Dendritic cell treated with granulocyte-macrophage colony-stimulating factor and Interleukin-4, amounts not matched to agents 40 ng/mL and 50 ng/mL, for 4 days (primary cell): ENCODE measurements at regions of chr15 and their contacts with region 1.

Region 1: GRCh38 chr15:65869127-65869953 is at the start of gene RAB11A:
- H3K4me3 Mint-ChIP-seq: peak within 1 kb of the TSS; percentile 96
- H3K27ac Mint-ChIP-seq: peak within 1 kb of the TSS; percentile 98
- H3K4me1 Mint-ChIP-seq: peaks cover 24% of the 10 kb centered on the region
- H3K27me3 Mint-ChIP-seq: no peaks in the 10 kb centered on the region

Region 2: DNA sequence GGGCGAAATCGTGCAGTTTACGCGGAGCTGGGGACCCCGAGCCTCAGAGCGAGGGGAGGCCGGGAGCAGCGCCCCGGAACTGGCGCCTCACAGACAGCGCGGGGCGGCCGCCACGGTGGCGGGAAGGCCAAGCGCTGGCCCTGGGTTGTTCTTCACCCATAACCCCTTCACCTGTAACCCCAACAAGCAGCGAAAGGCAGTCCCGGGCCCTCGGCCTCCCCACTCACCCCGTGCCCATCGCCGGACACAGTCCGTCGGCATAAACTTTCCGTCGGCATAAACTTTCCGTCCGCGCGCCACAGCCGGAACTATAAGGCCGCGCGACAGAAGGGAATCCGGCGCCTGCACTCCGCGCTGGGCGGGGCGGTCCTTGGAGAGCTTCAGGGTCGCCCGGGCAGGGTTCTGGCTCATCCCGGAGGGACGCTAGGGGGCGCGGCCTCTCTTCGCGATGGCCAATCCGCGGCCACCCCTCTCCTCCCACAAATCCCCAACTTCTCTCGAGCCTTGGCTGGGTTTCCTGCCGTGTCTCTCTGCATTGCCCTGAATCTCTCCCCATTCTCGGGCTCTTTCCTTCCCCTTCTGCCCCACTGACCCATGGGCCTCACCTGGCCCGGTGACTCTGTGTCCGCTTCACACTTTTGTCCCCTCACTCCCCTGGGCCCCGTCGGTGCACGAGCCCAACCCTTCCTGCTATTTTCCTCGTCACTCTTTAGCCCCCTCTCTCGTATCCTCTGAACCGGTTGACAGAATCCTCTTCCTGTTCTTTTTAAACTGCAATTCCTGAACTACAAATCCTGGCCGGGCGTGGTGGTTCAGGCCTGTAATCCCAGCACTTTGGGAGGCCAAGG is 258.2 kb before region 1 on chr15 and contains the start of gene INTS14:
- intact Hi-C with region 1: loop called (anchors 1 kb)
- H3K4me3 Mint-ChIP-seq: peak within 1 kb of the TSS; percentile 96
- H3K27ac Mint-ChIP-seq: peak within 1 kb of the TSS; percentile 97
- H3K4me1 Mint-ChIP-seq: peaks cover 37% of the 10 kb centered on the region
- H3K27me3 Mint-ChIP-seq: no peaks in the 10 kb centered on the region

Region 3: DNA sequence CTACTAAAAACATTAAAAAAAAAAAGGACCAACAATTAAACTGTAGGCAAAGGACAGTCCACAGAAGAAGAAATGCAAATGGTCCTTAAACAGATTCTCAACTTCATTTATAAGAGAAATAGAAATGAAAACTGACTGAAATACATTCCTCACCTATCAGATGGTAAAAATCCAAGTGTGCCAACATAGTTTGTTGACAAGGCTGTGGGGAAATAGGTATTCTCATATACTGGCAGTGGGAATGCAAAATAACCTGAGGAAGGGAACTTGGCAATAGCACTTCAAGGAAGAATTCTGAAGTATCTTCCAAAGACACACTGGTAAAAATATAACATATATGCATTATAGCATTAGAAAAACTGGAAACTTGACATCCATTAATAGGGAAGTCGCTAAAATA is 193.8 kb before region 1 on chr15:
- intact Hi-C with region 1: no loop called
- H3K4me3 Mint-ChIP-seq: no peak overlapping the region
- H3K27ac Mint-ChIP-seq: no peak overlapping the region
- H3K4me1 Mint-ChIP-seq: no peaks in the 10 kb centered on the region
- H3K27me3 Mint-ChIP-seq: no peaks in the 10 kb centered on the region

Region 4: GRCh38 chr15:65792130-65792987 is 77.0 kb before region 1 on chr15 and contains the start of gene DENND4A:
- intact Hi-C with region 1: no loop called
- H3K4me3 Mint-ChIP-seq: peak within 1 kb of the TSS; percentile 96
- H3K27ac Mint-ChIP-seq: peak within 1 kb of the TSS; percentile 99
- H3K4me1 Mint-ChIP-seq: peaks cover 41% of the 10 kb centered on the region
- H3K27me3 Mint-ChIP-seq: no peaks in the 10 kb centered on the region

Region 5: DNA sequence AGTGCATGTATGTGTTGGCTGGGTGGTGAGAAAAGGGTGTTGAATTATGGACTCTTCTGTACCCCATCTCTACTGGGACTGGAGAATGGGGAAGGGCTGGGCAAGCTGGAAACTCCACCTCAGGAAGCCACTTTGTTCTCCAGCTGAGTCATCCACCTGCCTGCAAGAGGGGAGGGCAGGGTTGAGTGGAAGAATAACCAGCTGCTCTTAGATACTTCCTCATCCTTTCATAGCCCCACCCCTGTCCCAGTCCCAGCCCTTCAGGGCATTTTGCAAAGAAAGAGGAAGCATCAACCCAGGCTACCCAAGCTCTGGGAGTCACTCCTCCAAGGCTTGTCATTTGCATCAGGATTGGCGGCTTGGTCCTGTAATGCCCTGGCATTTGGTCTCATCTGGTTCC is 33.0 kb after region 1 on chr15:
- intact Hi-C with region 1: loop called (anchors 2 kb)
- H3K4me3 Mint-ChIP-seq: no peak overlapping the region
- H3K27ac Mint-ChIP-seq: peak overlapping the region; percentile 77
- H3K4me1 Mint-ChIP-seq: peaks cover 42% of the 10 kb centered on the region
- H3K27me3 Mint-ChIP-seq: no peaks in the 10 kb centered on the region

Region 6: DNA sequence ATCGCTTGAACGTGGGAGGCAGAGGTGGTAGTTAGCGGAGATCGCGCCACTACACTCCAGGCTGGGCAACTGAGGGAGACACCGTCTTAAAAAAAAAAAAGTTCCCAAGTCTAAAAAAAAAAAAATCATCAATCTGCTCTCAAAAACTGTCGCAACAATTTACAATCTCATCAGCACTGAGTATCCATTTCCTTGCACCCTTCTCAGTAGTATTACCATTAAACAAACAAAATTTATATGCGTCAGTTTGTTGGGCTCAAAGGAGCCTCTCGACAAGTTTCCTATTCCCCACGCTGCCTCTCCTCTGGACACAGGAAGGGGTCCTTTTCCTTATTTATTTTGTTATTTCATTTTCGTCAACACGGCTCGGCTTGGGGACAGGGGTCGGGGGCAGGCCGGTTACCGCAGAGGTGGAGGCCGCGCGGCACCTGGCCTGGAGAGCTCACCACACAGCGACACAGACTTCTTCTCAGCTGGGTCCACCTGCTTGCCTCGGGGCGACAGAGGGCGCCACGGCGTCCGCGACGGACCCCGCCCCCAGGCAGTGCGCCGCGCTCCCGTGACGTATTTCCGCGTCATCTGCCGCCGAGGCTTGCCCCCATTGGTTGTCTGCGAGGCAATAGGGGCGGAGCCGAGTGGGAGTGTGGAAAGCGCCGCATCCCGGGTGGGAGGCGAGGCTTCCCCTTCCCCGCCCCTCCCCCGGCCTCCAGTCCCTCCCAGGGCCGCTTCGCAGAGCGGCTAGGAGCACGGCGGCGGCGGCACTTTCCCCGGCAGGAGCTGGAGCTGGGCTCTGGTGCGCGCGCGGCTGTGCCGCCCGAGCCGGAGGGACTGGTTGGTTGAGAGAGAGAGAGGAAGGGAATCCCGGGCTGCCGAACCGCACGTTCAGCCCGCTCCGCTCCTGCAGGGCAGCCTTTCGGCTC is 517.1 kb after region 1 on chr15 and contains the start of gene MAP2K1:
- intact Hi-C with region 1: no loop called
- H3K4me3 Mint-ChIP-seq: peak within 1 kb of the TSS; percentile 95
- H3K27ac Mint-ChIP-seq: peak within 1 kb of the TSS; percentile 92
- H3K4me1 Mint-ChIP-seq: peaks cover 57% of the 10 kb centered on the region
- H3K27me3 Mint-ChIP-seq: no peaks in the 10 kb centered on the region